GM12878 (cell line): ENCODE measurements at regions of chr12 and their contacts with region 1.

Region 1: GRCh38 chr12:614411-614970 is 48.8 kb downstream of the NINJ2 start:
- DNase-seq: no peak
- ATAC-seq: peak; percentile 78
- H3K4me3 ChIP-seq: no peak overlapping the region
- H3K27ac ChIP-seq: no peak overlapping the region
- H3K4me1 ChIP-seq: peaks cover 10% of the 10 kb centered on the region
- H3K27me3 ChIP-seq: no peaks in the 10 kb centered on the region
- CTCF ChIP-seq: peak; percentile 61 to 86 (median 63)
- EP300 ChIP-seq: no peak
- POLR2A ChIP-seq: no peak
- RAD21 ChIP-seq: peak; percentile 75

Region 2: DNA sequence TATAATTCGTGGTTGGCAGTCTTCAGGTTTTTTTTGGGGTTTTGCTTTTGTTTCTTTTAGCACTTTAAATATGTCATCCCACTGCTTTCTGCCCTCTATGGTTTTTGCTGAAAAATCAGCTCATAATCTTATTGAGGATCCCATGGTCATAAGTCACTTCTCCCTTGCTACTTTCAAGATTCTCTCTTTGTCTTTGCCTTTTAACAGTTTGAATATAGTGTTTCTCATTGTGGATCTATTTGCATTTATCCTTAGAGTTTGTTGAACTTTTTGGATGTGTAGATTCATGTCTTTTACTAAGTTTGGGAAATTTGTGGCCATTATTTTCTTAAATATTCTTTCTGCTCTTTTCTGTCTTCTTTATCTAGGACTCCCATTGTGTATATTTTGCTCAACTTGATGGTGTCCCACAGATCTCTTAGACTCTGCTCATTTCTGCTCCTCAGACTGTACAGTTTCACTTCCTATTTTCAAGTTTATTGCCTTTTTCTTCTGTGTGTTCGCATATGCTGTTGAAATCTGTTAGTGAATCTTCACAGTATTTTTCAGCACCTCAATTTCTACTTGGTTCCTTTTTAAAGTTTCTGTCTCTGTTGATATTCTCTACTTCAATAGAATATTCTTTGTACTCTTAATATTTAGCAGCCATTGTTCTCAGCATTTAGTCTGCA is 208.7 kb after region 1 on chr12:
- CTCF ChIA-PET with region 1: interaction called, 4 read pairs
- POLR2A ChIA-PET with region 1: interaction called, 4 read pairs
- RAD21 ChIA-PET with region 1: interaction called, 6 read pairs
- SMC1A ChIA-PET with region 1: interaction called, 67 read pairs
- in situ Hi-C with region 1: no loop called
- intact Hi-C with region 1: no loop called
- DNase-seq: peak; percentile 82
- ATAC-seq: peak; percentile 99
- H3K4me3 ChIP-seq: peak overlapping the region; percentile 21; the same call in 1 of the 2 replicates
- H3K27ac ChIP-seq: peak overlapping the region; percentile 54
- H3K4me1 ChIP-seq: peaks cover 14% of the 10 kb centered on the region; the same call in 1 of the 2 replicates
- H3K27me3 ChIP-seq: no peaks in the 10 kb centered on the region
- CTCF ChIP-seq: no peak
- EP300 ChIP-seq: peak in 1 of 2 experiments; percentile 82; a peak in 2 of 4 replicates
- POLR2A ChIP-seq: no peak
- RAD21 ChIP-seq: no peak

Region 3: GRCh38 chr12:873954-874353 is 259.5 kb after region 1 on chr12:
- CTCF ChIA-PET with region 1: interaction called, 9 read pairs
- POLR2A ChIA-PET with region 1: no interaction called
- RAD21 ChIA-PET with region 1: interaction called, 3 read pairs
- SMC1A ChIA-PET with region 1: interaction called, 12 read pairs
- in situ Hi-C with region 1: no loop called
- intact Hi-C with region 1: no loop called
- DNase-seq: no peak
- ATAC-seq: peak; percentile 26
- H3K4me3 ChIP-seq: no peak overlapping the region
- H3K27ac ChIP-seq: no peak overlapping the region
- H3K4me1 ChIP-seq: no peaks in the 10 kb centered on the region
- H3K27me3 ChIP-seq: no peaks in the 10 kb centered on the region
- CTCF ChIP-seq: no peak
- EP300 ChIP-seq: no peak
- POLR2A ChIP-seq: no peak
- RAD21 ChIP-seq: no peak